H1 (cell line): ENCODE measurements at regions of chr3 and their contacts with region 1.

Region 1: DNA sequence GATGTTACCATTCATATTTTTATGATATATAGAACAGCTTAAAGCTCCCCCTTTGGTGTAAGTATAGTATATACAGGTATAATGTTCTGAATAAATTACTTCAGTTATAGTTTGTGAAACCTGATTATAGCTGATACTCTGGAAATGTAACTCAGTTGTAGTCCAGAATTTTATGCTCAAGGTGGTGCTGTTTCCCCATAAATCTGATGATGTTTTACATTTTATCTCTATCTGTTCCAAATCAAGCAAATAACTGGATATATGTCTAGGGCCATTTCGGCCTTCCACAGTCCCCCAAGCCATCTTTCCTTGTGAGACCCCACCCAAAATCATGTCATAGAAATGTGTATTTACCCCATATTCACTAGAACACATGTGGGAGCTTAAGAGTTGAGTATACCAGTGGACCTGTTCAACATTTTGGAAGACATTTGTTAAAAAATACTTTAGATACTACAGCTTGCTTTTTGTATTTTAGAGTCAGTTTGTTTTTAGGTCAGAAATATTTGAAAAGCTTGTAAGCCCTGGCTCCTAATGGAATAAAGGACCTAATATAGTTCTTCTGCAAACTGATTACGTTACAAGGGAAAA is 107.1 kb downstream of the ATG7 start:
- DNase-seq: no peak
- H3K4me3 ChIP-seq: no peak overlapping the region
- H3K27ac ChIP-seq: no peak overlapping the region
- H3K4me1 ChIP-seq: peaks cover 0 to 8% (median 0%) of the 10 kb centered on the region in 4 experiments; a peak in 2 of 7 replicates
- H3K27me3 ChIP-seq: no peaks in the 10 kb centered on the region
- CTCF ChIP-seq: peak in 2 of 3 experiments; percentile 34 to 48; a peak in 2 of 4 replicates
- EP300 ChIP-seq: no peak
- POLR2A ChIP-seq: no peak
- RAD21 ChIP-seq: peak; percentile 80 to 81

Region 2: GRCh38 chr3:11271986-11272904 is 107.1 kb before region 1 on chr3 and contains the start of gene ATG7:
- CTCF ChIA-PET with region 1: no interaction called
- POLR2A ChIA-PET with region 1: no interaction called
- DNase-seq: peak; percentile 88 to 96
- H3K4me3 ChIP-seq: peak within 1 kb of the TSS; percentile 89 to 99 (median 98)
- H3K27ac ChIP-seq: peak within 1 kb of the TSS; percentile 95
- H3K4me1 ChIP-seq: peaks cover 0 to 9% (median 5%) of the 10 kb centered on the region in 4 experiments; a peak in 4 of 7 replicates
- H3K27me3 ChIP-seq: no peaks in the 10 kb centered on the region
- CTCF ChIP-seq: no peak
- EP300 ChIP-seq: 0 out of 3 replicates have a peak, but pooled peaks of 1 of the 2 experiments have one; percentile 5
- POLR2A ChIP-seq: peak; percentile 89 to 97
- RAD21 ChIP-seq: no peak
- total RNA-seq, gene ATG7: 15.1 and 19.1 TPM in 2 replicates

Region 3: GRCh38 chr3:11392014-11392859 is 12.9 kb after region 1 on chr3:
- CTCF ChIA-PET with region 1: interaction called, 32 read pairs
- POLR2A ChIA-PET with region 1: no interaction called
- DNase-seq: no peak
- H3K4me3 ChIP-seq: no peak overlapping the region
- H3K27ac ChIP-seq: no peak overlapping the region
- H3K4me1 ChIP-seq: peaks cover 0 to 5% (median 0%) of the 10 kb centered on the region in 4 experiments; a peak in 1 of 7 replicates
- H3K27me3 ChIP-seq: no peaks in the 10 kb centered on the region
- CTCF ChIP-seq: no peak
- EP300 ChIP-seq: no peak
- POLR2A ChIP-seq: no peak
- RAD21 ChIP-seq: no peak

Region 4: DNA sequence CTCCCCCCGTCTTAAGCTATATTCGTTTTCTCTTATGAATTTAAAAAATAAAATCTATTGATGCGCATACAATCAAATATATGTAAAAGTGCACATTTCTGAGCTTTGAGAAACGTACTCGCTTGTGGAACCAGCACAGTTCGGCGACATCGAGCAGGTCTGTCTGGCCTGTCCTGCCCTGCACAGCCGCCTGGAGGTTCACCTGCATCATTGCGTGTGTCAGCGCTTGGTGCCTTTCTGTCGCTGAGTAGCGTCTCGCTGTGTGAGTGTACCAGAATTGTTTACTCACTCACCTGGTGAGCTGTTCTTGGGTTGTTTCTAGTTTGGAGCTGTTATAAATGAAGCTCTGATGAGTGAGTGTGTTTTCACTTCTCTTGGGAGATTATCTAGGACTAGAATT is 160.3 kb after region 1 on chr3:
- CTCF ChIA-PET with region 1: interaction called, 58 read pairs
- POLR2A ChIA-PET with region 1: no interaction called
- DNase-seq: no peak
- H3K4me3 ChIP-seq: no peak overlapping the region
- H3K27ac ChIP-seq: no peak overlapping the region
- H3K4me1 ChIP-seq: peaks cover 0 to 2% (median 0%) of the 10 kb centered on the region in 4 experiments; a peak in 2 of 7 replicates
- H3K27me3 ChIP-seq: no peaks in the 10 kb centered on the region
- CTCF ChIP-seq: peak; percentile 48 to 67 (median 51)
- EP300 ChIP-seq: no peak
- POLR2A ChIP-seq: no peak
- RAD21 ChIP-seq: peak; percentile 69 to 75

Region 5: GRCh38 chr3:11651900-11652299 is 272.6 kb after region 1 on chr3:
- CTCF ChIA-PET with region 1: interaction called, 79 read pairs
- POLR2A ChIA-PET with region 1: interaction called, 6 read pairs
- DNase-seq: no peak
- H3K4me3 ChIP-seq: peak overlapping the region in 1 of 4 experiments; percentile 0; a peak in 1 of 8 replicates
- H3K27ac ChIP-seq: no peak overlapping the region
- H3K4me1 ChIP-seq: peaks cover 2 to 11% (median 5%) of the 10 kb centered on the region in 4 experiments; a peak in 4 of 7 replicates
- H3K27me3 ChIP-seq: no peaks in the 10 kb centered on the region
- CTCF ChIP-seq: peak in 2 of 3 experiments; percentile 9 to 12; a peak in 2 of 4 replicates
- EP300 ChIP-seq: no peak
- POLR2A ChIP-seq: no peak
- RAD21 ChIP-seq: peak in 1 of 2 experiments; percentile 62; a peak in 3 of 4 replicates

Region 6: DNA sequence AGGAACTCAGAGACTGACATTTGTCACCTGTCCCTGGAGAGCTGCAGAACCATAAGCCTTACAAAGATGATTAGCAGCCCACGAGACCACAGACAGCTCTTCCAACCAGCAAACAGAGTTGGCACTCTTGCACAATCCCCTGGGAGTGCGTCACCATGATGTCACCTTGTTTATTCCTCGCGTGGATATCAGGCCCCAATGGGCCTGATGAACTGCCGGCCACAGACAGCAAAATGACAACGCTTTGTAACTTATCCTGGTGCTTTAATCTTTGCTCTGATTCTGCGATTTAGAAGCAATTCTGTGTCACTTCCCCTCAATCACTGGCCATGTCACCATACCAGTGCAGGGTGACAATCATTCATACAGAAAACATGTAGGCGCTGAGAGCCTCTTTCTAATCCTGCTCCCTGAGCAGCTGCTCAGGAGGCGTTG is 378.1 kb after region 1 on chr3:
- CTCF ChIA-PET with region 1: no interaction called
- POLR2A ChIA-PET with region 1: no interaction called
- DNase-seq: no peak
- H3K4me3 ChIP-seq: no peak overlapping the region
- H3K27ac ChIP-seq: no peak overlapping the region
- H3K4me1 ChIP-seq: no peaks in the 10 kb centered on the region; a peak in 1 of 7 replicates
- H3K27me3 ChIP-seq: no peaks in the 10 kb centered on the region
- CTCF ChIP-seq: no peak
- EP300 ChIP-seq: no peak
- POLR2A ChIP-seq: no peak
- RAD21 ChIP-seq: no peak

Region 7: DNA sequence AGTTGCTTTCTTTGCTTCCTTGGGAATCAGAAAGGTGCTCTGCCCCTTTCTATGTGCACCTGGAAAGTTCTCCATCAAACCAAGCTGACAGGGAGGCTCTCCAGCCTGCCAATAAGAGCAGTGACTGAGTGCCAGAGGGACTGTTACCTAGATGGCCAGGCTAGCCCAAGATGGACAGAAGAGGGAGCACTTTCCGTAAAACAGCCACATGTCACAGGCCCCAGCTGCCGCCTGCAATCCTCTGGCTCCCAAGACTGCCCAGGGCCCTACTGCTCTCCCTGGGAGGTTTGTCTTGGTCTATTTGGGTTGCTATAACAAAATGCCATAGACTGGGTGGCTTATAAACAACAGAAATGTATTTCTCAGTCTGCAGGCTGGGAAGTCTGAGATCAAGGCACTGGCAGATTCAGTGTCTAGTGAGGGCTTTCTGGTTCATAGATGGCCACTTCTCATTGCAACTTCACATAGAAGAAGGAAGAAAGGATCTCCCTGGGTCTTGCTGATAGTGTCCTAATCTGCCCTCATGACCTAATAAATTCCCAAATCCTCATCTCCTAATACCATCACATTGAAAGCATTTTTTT is 395.1 kb after region 1 on chr3:
- CTCF ChIA-PET with region 1: interaction called, 10 read pairs
- POLR2A ChIA-PET with region 1: no interaction called
- DNase-seq: peak; percentile 36 to 71
- H3K4me3 ChIP-seq: no peak overlapping the region
- H3K27ac ChIP-seq: no peak overlapping the region
- H3K4me1 ChIP-seq: peaks cover 4 to 13% (median 6%) of the 10 kb centered on the region in 4 experiments; a peak in 6 of 7 replicates
- H3K27me3 ChIP-seq: peaks cover 0 to 2% (median 0%) of the 10 kb centered on the region in 4 experiments; a peak in 2 of 7 replicates
- CTCF ChIP-seq: peak; percentile 70 to 85 (median 77)
- EP300 ChIP-seq: no peak
- POLR2A ChIP-seq: no peak
- RAD21 ChIP-seq: peak; percentile 67 to 75